Breast epithelium (tissue), 4 donors: ENCODE measurements at regions of chr6 and their contacts with region 1.

Region 1: DNA sequence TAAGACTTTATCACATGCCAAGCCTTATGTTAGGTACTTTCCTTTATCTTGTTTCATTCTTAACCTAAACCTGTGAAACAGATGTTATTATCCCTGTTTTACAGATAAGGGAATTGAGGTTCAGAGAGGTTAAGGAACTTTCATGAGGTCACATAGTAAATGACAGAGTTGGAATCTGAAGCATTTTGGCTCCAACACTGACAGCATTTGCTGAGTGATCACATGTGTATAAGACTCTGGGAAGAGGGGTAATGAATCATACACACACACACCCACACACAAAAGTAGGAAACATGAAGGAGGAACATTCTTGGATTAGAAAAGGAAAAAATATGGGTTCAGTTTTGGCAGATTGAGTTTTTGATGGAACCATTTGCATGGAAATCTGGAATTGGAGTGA is 212.5 kb downstream of the GJA1 start:
- DNase-seq: no peak
- H3K4me3 ChIP-seq: no peak overlapping the region
- H3K27ac ChIP-seq: no peak overlapping the region
- H3K4me1 ChIP-seq: no peaks in the 10 kb centered on the region
- H3K27me3 ChIP-seq: no peaks in the 10 kb centered on the region
- CTCF ChIP-seq: no peak
- POLR2A ChIP-seq: no peak

Region 2: GRCh38 chr6:121597654-121598053 is 50.3 kb before region 1 on chr6:
- intact Hi-C with region 1: no loop called
- DNase-seq: no peak
- H3K4me3 ChIP-seq: no peak overlapping the region
- H3K27ac ChIP-seq: no peak overlapping the region
- H3K4me1 ChIP-seq: no peaks in the 10 kb centered on the region
- H3K27me3 ChIP-seq: no peaks in the 10 kb centered on the region
- CTCF ChIP-seq: no peak
- POLR2A ChIP-seq: no peak

Region 3: GRCh38 chr6:121682666-121683065 is 34.8 kb after region 1 on chr6:
- intact Hi-C with region 1: loop called (anchors 2 kb)
- DNase-seq: no peak
- H3K4me3 ChIP-seq: no peak overlapping the region
- H3K27ac ChIP-seq: no peak overlapping the region
- H3K4me1 ChIP-seq: no peaks in the 10 kb centered on the region
- H3K27me3 ChIP-seq: no peaks in the 10 kb centered on the region
- CTCF ChIP-seq: no peak
- POLR2A ChIP-seq: no peak